Activated CD4-positive, alpha-beta T cell treated with anti-CD3 and anti-CD28 coated beads, Interleukin-2, amount 10 ng/mL, durations not matched to agents 24 days and 14 days (primary cell): ENCODE measurements at regions of chr17 and their contacts with region 1.

Region 1: GRCh38 chr17:49788478-49789242 is at the start of gene KAT7:
- DNase-seq: peak; percentile 99
- H3K4me3 Mint-ChIP-seq: peak within 1 kb of the TSS; percentile 89
- H3K27ac Mint-ChIP-seq: peak within 1 kb of the TSS; percentile 93
- H3K4me1 Mint-ChIP-seq: peaks cover 36% of the 10 kb centered on the region
- H3K27me3 Mint-ChIP-seq: no peaks in the 10 kb centered on the region
- total RNA-seq, gene KAT7: 67.2 and 75.2 TPM in 2 replicates

Region 2: GRCh38 chr17:49414622-49415350 is 373.9 kb before region 1 on chr17 and contains the start of gene PHB1:
- intact Hi-C with region 1: loop called (anchors 1 kb)
- DNase-seq: peak; percentile 98
- H3K4me3 Mint-ChIP-seq: peak within 1 kb of the TSS; percentile 91
- H3K27ac Mint-ChIP-seq: peak within 1 kb of the TSS; percentile 83
- H3K4me1 Mint-ChIP-seq: peaks cover 5% of the 10 kb centered on the region
- H3K27me3 Mint-ChIP-seq: peaks cover 4% of the 10 kb centered on the region
- total RNA-seq, gene PHB1: 440 and 448 TPM in 2 replicates

Region 3: GRCh38 chr17:49694847-49695683 is 93.6 kb before region 1 on chr17:
- intact Hi-C with region 1: loop called (anchors 1 kb)
- DNase-seq: peak; percentile 92
- H3K4me3 Mint-ChIP-seq: peak overlapping the region; percentile 58
- H3K27ac Mint-ChIP-seq: peak overlapping the region; percentile 82
- H3K4me1 Mint-ChIP-seq: peaks cover 32% of the 10 kb centered on the region
- H3K27me3 Mint-ChIP-seq: no peaks in the 10 kb centered on the region

Region 4: GRCh38 chr17:49715717-49716279 is 72.9 kb before region 1 on chr17:
- intact Hi-C with region 1: loop called (anchors 2 kb)
- DNase-seq: no peak
- H3K4me3 Mint-ChIP-seq: peak overlapping the region; percentile 43
- H3K27ac Mint-ChIP-seq: peak overlapping the region; percentile 88
- H3K4me1 Mint-ChIP-seq: peaks cover 26% of the 10 kb centered on the region
- H3K27me3 Mint-ChIP-seq: no peaks in the 10 kb centered on the region

Region 5: GRCh38 chr17:49739641-49740271 is 48.9 kb before region 1 on chr17:
- intact Hi-C with region 1: loop called (anchors 2 kb)
- DNase-seq: peak; percentile 96
- H3K4me3 Mint-ChIP-seq: peak overlapping the region; percentile 87
- H3K27ac Mint-ChIP-seq: peak overlapping the region; percentile 99
- H3K4me1 Mint-ChIP-seq: peaks cover 66% of the 10 kb centered on the region
- H3K27me3 Mint-ChIP-seq: no peaks in the 10 kb centered on the region

Region 6: DNA sequence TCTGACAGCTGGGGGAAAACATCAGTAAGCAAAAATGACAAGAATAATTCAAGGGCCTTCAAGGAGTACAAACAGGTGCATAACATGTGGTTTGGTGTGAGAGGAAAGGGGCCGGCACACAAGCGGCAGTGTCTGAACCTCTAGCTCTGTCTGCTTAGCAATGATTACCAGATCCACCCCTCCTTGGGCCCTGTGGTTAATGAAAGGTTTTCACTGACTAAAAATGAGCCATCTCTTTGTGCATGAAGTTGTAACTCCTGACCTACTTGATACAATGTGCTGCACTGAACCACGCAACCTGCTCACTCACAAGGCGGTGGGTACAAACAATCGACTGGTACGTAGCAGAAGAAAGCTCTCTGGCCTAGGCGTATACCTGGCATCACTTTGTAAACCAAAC is 39.9 kb before region 1 on chr17:
- intact Hi-C with region 1: loop called (anchors 2 kb)
- DNase-seq: peak; percentile 82
- H3K4me3 Mint-ChIP-seq: peak overlapping the region; percentile 81
- H3K27ac Mint-ChIP-seq: peak overlapping the region; percentile 94
- H3K4me1 Mint-ChIP-seq: peaks cover 64% of the 10 kb centered on the region
- H3K27me3 Mint-ChIP-seq: no peaks in the 10 kb centered on the region

Region 7: DNA sequence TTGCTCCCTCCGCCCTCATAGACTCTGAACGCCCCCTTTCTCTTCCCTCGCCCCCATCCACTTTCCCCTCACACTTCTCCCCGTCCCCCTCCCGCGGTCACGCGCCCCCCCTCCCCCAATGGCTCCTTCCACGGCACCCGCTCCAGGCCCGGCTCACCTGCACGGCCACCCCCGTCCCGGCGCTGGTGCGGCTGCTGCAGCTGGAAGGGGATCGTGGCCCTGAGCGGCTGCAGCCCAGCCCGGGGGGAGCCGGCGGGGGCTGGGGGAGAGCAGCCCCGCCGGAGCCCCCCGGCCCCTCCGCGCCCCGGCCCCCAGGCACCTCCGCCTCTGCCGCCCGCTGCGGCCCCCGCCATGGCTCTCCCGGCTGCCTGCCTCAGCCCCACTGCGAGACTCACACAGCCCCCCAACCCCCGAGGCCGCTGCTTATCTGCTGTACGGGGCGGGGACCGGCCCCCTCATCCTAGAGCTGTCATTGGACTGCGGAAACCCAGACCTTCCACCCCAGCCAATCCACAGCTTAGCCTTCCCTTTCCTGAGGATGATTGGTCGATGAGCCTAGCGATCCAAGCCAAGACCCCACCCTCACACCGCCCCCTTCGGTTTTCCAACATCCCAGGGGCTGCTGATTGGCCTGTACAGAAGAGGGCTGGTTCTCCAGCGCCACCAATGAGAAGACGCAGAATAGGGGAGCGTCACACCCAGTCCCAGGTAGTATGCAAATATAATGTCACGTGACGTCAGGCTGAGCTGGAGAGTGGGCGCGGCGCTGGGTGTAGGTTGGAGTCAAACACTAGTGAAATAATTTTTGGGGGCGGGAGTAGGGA is 24.7 kb before region 1 on chr17 and contains the start of gene FAM117A:
- intact Hi-C with region 1: loop called (anchors 1 kb)
- DNase-seq: peak; percentile 98
- H3K4me3 Mint-ChIP-seq: peak within 1 kb of the TSS; percentile 96
- H3K27ac Mint-ChIP-seq: peak within 1 kb of the TSS; percentile 92
- H3K4me1 Mint-ChIP-seq: peaks cover 52% of the 10 kb centered on the region
- H3K27me3 Mint-ChIP-seq: peaks cover 29% of the 10 kb centered on the region
- total RNA-seq, gene FAM117A: 10.9 and 11.1 TPM in 2 replicates

Region 8: GRCh38 chr17:50478391-50479381 is 690.0 kb after region 1 on chr17 and contains the start of gene RSAD1:
- intact Hi-C with region 1: no loop called
- DNase-seq: peak; percentile 95
- H3K4me3 Mint-ChIP-seq: peak within 1 kb of the TSS; percentile 86
- H3K27ac Mint-ChIP-seq: peak within 1 kb of the TSS; percentile 91
- H3K4me1 Mint-ChIP-seq: peaks cover 13% of the 10 kb centered on the region
- H3K27me3 Mint-ChIP-seq: peaks cover 4% of the 10 kb centered on the region
- total RNA-seq, gene RSAD1: 53.6 and 61.2 TPM in 2 replicates